ENCODE measurements at regions of chr10 and their contacts with region 1.

Region 1: GRCh38 chr10:44974628-44975431 is 3.8 kb downstream of the DEPP1 start:
- DNase-seq: no peak
- H3K4me3 ChIP-seq: peak overlapping the region; percentile 57 to 80 (median 62)
- H3K27ac ChIP-seq: peak overlapping the region; percentile 88 to 92 (median 90)
- H3K4me1 ChIP-seq: peaks cover 45 to 77% (median 74%) of the 10 kb centered on the region in 4 donors
- H3K27me3 ChIP-seq: no peaks in the 10 kb centered on the region
- CTCF ChIP-seq: peak in 2 of 3 experiments; percentile 95 to 96
- EP300 ChIP-seq: no peak
- POLR2A ChIP-seq: no peak

Region 2: DNA sequence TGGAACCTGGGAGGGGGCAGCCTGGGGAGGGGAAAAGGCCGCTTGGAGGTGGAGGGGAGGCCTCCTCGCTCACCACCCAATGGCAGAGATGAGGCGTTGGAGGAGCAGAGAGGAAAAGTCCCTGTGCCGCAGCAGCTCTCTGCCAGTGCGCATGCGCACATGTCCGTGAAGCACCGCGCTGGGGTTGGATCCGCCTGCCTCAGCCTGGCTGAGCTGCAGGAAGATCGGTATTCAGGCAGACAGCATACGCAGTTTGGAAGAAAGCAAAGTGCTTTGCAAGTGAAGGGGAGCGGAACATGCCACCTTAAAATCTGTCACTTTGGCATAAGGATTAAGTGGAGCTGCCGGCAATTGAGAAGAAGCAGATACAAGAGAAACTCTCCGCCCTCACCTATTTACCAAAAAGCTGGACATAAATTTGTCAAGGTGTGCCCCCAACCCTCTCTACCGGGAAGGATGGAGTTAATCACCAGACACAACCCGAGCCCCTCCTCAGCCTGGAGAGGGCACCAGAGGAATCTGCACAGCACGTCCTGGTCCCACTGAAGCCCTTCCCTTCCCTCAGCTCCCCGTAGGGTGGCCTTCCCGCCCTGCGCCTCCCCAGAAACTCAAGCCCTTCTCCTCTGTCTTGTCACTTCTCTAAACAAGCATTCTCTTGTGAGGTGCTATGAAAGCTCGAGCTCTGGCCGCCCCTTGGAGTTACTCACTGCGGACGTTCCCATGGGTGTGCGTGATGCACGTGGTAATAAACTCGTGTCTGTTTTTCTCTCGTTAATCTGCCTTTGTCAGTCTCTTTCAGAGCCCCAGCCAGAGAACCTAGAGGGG is 95.9 kb before region 1 on chr10:
- intact Hi-C with region 1: loop called (anchors 10 kb)
- DNase-seq: peak; percentile 94
- H3K4me3 ChIP-seq: peak overlapping the region; percentile 51 to 65 (median 54)
- H3K27ac ChIP-seq: peak overlapping the region; percentile 83 to 93 (median 92)
- H3K4me1 ChIP-seq: peaks cover 22 to 61% (median 51%) of the 10 kb centered on the region in 4 donors
- H3K27me3 ChIP-seq: no peaks in the 10 kb centered on the region
- CTCF ChIP-seq: no peak
- EP300 ChIP-seq: peak; percentile 56
- POLR2A ChIP-seq: no peak

Region 3: DNA sequence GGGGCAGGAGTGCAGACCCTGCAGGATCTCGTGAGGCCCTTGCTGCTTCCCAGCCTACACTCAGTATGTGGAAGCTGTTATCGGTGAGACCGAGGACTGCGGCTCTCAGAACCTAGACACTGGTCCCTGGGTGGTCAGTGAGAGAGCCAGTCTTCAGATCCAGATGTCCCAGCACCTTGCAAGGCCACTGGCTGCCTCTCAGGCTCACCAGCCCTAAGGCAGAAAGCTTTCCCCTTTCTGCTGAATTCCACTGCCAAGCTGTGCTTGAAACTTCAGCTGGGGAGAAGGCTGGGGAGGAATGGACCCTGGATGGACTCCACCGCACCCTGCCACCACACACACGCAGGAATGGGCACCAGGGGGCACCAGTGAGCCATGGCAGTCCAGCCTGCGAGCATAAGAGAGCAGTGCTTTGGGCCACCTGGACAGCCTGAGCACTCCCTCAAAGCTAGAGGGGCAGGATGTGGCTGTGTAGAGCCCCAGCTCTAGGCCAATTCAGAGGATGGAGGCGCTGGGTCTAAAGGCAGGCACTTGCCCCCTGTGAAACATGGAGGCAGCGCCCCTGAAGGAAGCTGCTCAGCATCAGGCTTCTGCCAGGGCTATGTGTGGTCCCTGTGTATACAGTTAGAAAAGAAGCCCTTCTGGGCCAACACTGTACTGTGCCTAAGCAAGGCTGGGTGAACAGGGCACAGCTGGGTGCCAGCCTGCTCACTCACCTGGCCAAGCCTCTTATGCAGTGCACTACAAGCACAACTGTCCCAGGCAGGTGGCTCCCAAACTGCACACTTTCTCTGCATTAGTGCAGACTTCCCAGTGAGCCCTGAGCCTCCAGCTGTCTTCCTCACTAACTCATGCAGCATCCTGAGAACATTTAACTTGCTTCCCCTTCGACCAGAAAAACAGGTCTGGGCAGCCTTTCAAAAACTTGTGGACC is 42.0 kb before region 1 on chr10:
- intact Hi-C with region 1: loop called (anchors 1 kb)
- DNase-seq: peak; percentile 96
- H3K4me3 ChIP-seq: no peak overlapping the region
- H3K27ac ChIP-seq: peak overlapping the region in 1 of 4 donors; percentile 12
- H3K4me1 ChIP-seq: peaks cover 35 to 43% (median 40%) of the 10 kb centered on the region in 4 donors
- H3K27me3 ChIP-seq: no peaks in the 10 kb centered on the region
- CTCF ChIP-seq: peak in 2 of 3 experiments; percentile 91 to 93
- EP300 ChIP-seq: no peak
- POLR2A ChIP-seq: no peak

Region 4: DNA sequence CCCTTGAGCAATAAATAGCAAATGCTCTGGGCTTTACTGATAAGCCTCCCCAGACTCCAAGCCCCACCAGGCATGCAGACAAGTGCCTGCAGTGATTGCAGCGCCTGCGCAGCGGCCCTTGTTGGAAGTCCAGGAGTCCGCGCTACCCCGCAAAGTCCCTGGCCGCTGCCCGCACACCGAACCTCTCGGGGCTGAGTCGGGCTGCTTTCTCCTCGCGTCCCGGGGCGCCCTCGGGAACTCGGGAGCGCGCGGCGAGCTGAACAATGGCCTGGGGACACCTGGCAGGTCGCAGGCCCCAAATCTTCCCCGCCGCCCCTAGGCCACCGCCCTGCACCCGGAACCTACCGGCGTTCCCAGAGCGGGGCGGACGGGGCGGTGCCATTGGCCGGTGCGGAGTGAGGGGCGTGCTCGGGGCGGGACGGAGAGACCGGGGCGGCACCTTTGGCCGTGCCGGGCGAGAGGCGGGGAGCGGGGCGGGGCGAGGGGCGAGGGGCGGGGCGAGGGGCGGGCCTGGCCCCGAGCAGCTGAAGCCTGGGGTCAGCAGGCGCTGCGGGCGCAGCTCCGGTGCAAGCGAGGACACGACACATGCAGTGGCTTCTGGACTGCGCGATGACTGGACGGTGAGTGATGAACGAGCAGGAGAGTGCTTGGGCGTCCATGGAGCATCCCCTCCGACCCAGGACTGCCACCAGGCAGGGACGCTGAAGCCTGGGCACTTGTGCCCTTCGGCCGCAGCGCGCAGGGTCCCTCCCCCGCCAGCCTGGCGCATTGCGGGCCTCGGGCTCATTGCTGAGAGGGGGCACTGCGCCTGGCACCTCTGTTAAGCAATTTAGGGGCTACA is 15.4 kb before region 1 on chr10 and contains the start of gene RASSF4:
- intact Hi-C with region 1: no loop called
- DNase-seq: peak; percentile 98
- H3K4me3 ChIP-seq: peak within 1 kb of the TSS; percentile 72 to 83 (median 72)
- H3K27ac ChIP-seq: peak within 1 kb of the TSS; percentile 87 to 93 (median 90)
- H3K4me1 ChIP-seq: peaks cover 51 to 69% (median 66%) of the 10 kb centered on the region in 4 donors
- H3K27me3 ChIP-seq: no peaks in the 10 kb centered on the region
- CTCF ChIP-seq: peak in 1 of 3 experiments; percentile 10
- EP300 ChIP-seq: no peak
- POLR2A ChIP-seq: peak; percentile 84
- total RNA-seq, gene RASSF4: 27.6 to 41.5 (median 32.7) TPM

Measured in esophagus muscularis mucosa (tissue), 4 donors.